PC-3 (cell line): ENCODE measurements at regions of chr2 and their contacts with region 1.

Region 1: DNA sequence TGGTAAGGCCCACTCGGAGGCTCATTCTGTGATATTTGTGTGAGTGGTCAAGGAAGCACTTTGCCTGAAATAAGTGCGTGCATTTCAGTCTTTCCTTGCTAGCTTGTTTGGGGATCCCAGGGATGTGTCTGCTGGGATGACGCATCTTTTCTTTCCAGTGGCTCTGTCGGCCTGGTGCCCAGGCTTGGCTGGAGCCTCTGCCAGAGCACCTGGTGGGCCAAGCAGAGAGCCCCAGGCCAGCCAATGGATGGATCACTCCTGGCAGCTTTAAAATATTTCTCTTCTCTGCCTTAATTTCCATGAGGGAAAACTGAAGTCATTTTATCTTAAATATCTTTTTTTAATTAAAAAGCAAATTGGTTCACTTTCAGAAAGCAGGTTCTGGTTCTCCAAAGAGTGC is 501.8 kb upstream of the HS6ST1 start:
- DNase-seq: no peak
- ATAC-seq: no peak
- H3K4me3 ChIP-seq: no peak overlapping the region
- H3K27ac ChIP-seq: no peak overlapping the region
- H3K4me1 ChIP-seq: no peaks in the 10 kb centered on the region
- H3K27me3 ChIP-seq: peaks cover 13% of the 10 kb centered on the region; the same call in 1 of the 2 replicates
- CTCF ChIP-seq: no peak

Region 2: DNA sequence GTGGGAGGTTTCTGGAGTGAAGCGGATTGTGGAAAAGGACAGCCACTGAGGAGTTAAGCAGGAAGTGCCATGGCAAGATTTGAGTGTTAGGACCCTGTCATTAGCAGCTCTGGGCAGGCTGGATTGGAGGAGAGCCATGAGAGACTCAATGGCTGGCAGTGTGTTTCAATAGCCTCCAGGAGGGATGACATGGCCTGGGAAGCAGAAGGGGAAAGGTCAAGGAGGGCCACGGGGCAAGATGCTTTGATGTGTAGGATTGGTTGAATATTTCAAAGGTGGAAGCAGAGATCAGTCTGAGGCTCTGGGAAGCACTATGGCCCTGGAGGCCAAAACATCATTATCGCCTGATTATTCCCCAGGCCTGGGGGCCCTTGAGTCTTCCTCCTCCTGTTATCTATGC is 272.8 kb before region 1 on chr2:
- CTCF ChIA-PET with region 1: no interaction called
- POLR2A ChIA-PET with region 1: interaction called, 10 read pairs
- intact Hi-C with region 1: no loop called
- DNase-seq: no peak
- ATAC-seq: no peak
- H3K4me3 ChIP-seq: no peak overlapping the region
- H3K27ac ChIP-seq: no peak overlapping the region
- H3K4me1 ChIP-seq: no peaks in the 10 kb centered on the region
- H3K27me3 ChIP-seq: peaks cover 51% of the 10 kb centered on the region
- CTCF ChIP-seq: no peak

Region 3: DNA sequence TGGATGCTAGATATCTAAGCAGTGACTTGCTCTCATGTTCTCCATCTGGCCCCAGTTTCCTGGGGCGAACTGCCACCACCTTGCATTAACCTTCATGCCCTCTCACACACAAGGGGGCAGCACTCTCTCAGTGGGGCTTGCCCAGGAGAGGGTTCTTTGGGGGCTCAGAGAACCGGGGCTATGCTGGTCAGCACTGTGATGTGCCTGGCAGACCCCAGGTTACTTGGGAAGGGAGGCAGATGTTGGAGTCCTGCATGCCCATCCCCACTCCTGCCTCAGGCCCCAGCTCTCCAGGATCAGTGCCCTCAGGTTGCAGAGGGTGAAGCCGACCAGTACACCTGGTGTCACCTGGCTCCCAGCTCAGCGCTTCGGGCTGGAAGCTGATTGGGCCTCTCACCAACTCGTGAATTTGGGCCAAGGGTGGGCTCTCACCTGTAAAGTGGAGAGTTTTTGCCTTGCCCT is 105.6 kb before region 1 on chr2:
- CTCF ChIA-PET with region 1: no interaction called
- POLR2A ChIA-PET with region 1: no interaction called
- intact Hi-C with region 1: no loop called
- DNase-seq: no peak
- ATAC-seq: no peak
- H3K4me3 ChIP-seq: no peak overlapping the region
- H3K27ac ChIP-seq: no peak overlapping the region
- H3K4me1 ChIP-seq: no peaks in the 10 kb centered on the region
- H3K27me3 ChIP-seq: peaks cover 30% of the 10 kb centered on the region
- CTCF ChIP-seq: 0 out of 2 replicates have a peak, but pooled peaks have one; percentile 16

Region 4: GRCh38 chr2:128841803-128842202 is 21.4 kb after region 1 on chr2:
- CTCF ChIA-PET with region 1: no interaction called
- POLR2A ChIA-PET with region 1: no interaction called
- intact Hi-C with region 1: no loop called
- DNase-seq: no peak
- ATAC-seq: no peak
- H3K4me3 ChIP-seq: no peak overlapping the region
- H3K27ac ChIP-seq: no peak overlapping the region
- H3K4me1 ChIP-seq: no peaks in the 10 kb centered on the region
- H3K27me3 ChIP-seq: no peaks in the 10 kb centered on the region
- CTCF ChIP-seq: no peak